Mammary epithelial cell (primary cell): ENCODE measurements at regions of chr1 and their contacts with region 1.

Region 1: DNA sequence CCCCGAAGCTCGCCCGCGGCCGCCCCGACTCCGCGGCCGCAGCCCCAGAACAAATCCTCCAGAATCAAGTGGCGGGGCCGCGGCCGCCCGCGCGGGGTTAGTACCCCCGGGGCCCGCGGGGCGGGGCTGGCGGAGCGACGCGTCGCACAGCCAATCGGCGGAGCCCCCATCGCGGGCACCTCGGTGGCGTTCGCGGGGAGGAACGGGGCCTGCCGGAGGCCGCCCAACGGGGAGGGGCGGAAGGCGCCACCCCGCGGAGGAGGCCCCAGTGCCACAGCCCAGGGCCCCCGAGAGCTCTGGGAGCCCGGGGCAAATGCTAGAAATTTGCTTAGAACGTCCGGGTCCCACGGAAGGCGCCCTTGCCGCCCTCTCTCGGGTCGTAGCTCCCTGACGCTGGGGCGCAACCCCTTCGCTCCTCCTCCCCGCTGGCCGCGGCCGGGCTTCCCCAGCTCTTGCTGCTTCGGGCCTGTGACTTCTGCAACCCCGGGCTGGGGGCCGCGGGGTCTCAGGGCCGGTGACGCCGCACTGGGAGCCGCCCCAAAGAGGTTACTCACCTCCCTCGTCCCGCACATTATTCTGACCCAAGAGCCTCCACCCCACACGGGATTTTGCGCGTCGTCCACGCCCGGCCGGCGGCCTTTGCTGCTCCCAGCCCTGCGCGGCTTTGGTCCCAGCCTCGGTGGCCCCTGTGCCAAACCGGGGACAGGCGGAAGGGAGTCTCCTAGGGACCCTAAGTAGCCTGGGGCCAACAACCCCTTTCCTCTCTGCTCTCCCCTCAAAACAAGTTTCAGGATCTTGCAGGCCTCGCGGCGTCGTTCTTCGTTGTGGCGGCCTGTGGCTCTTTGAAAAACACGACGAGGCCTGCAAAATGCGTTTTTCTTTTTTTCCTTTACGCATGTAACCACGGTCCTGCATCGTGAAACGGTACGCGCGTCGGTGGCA is at the start of gene RUNX3:
- DNase-seq: peak; percentile 21
- H3K4me3 ChIP-seq: peak within 1 kb of the TSS in 2 of 3 experiments; percentile 25 to 27
- H3K27ac ChIP-seq: no peak within 1 kb of the TSS
- H3K4me1 ChIP-seq: peaks cover 9% of the 10 kb centered on the region
- H3K27me3 ChIP-seq: peaks cover 22% of the 10 kb centered on the region
- CTCF ChIP-seq: peak in 1 of 2 donors; percentile 11
- total RNA-seq, gene RUNX3: 0.42 to 2.8 TPM

Region 2: GRCh38 chr1:24847995-24848881 is 82.2 kb before region 1 on chr1:
- CTCF ChIA-PET with region 1: no interaction called
- dilution Hi-C with region 1: no loop called
- in situ Hi-C with region 1: no loop called
- intact Hi-C with region 1: loop called (anchors 5 kb)
- DNase-seq: peak; percentile 54
- H3K4me3 ChIP-seq: peak overlapping the region; percentile 23 to 41 (median 41)
- H3K27ac ChIP-seq: no peak overlapping the region
- H3K4me1 ChIP-seq: peaks cover 11% of the 10 kb centered on the region
- H3K27me3 ChIP-seq: no peaks in the 10 kb centered on the region
- CTCF ChIP-seq: peak; percentile 58 to 95

Region 3: DNA sequence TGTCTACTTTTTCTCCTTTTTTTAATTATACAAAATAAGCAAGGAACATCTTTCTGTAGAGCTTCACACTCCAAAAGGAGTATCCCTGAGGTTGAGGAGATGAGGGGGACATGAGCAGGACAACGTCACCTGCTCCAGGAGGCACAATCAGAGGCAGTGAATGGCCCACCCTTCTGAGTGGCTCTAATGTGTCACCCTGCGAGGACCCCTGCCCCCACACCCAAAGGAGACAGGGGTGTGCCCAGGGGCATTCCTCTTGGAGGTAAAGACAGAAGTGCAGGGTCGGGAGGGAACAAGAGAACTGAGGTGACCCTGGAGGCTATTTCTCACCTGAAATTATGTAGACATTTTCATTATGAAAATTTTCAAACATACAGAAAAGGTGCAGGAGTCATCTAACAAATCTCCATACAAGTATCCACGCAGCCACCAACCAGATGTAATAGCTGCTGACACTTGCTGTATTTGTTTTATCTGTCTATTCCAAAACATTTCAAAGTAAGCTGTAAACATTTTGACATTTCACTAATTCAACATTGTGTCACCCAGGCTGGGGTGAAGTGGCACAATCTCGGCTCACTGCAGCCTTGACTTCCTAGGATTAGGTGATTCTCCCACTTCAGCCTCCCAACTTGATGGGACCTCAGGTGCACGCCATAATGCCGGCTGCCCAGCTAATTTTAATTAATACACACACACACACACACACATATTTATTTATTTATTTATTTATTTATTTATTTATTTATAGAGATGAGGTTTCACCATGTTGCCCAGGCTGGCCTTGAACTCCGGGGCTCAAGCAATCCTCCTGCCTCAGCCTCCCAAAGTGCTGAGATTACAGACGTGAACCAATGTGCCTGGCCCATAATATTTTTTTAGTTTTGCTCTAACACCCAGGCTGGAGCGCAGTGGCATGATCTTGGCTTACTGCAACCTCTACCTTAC is 71.1 kb before region 1 on chr1:
- CTCF ChIA-PET with region 1: no interaction called
- dilution Hi-C with region 1: no loop called
- in situ Hi-C with region 1: no loop called
- intact Hi-C with region 1: no loop called
- DNase-seq: no peak
- H3K4me3 ChIP-seq: no peak overlapping the region
- H3K27ac ChIP-seq: no peak overlapping the region
- H3K4me1 ChIP-seq: no peaks in the 10 kb centered on the region
- H3K27me3 ChIP-seq: no peaks in the 10 kb centered on the region
- CTCF ChIP-seq: no peak

Region 4: GRCh38 chr1:24987875-24988557 is 57.5 kb after region 1 on chr1:
- CTCF ChIA-PET with region 1: no interaction called
- dilution Hi-C with region 1: loop called (anchors 10 kb)
- in situ Hi-C with region 1: no loop called
- intact Hi-C with region 1: no loop called
- DNase-seq: no peak
- H3K4me3 ChIP-seq: no peak overlapping the region
- H3K27ac ChIP-seq: no peak overlapping the region
- H3K4me1 ChIP-seq: no peaks in the 10 kb centered on the region
- H3K27me3 ChIP-seq: no peaks in the 10 kb centered on the region
- CTCF ChIP-seq: no peak

Region 5: GRCh38 chr1:25006770-25007169 is 76.3 kb after region 1 on chr1:
- CTCF ChIA-PET with region 1: no interaction called
- dilution Hi-C with region 1: loop called (anchors 5 kb)
- in situ Hi-C with region 1: no loop called
- intact Hi-C with region 1: no loop called
- DNase-seq: no peak
- H3K4me3 ChIP-seq: no peak overlapping the region
- H3K27ac ChIP-seq: no peak overlapping the region
- H3K4me1 ChIP-seq: no peaks in the 10 kb centered on the region
- H3K27me3 ChIP-seq: peaks cover 9% of the 10 kb centered on the region
- CTCF ChIP-seq: no peak

Region 6: GRCh38 chr1:25037174-25038074 is 106.9 kb after region 1 on chr1:
- CTCF ChIA-PET with region 1: no interaction called
- dilution Hi-C with region 1: no loop called
- in situ Hi-C with region 1: no loop called
- intact Hi-C with region 1: loop called (anchors 1 kb)
- DNase-seq: no peak
- H3K4me3 ChIP-seq: no peak overlapping the region
- H3K27ac ChIP-seq: no peak overlapping the region
- H3K4me1 ChIP-seq: peaks cover 5% of the 10 kb centered on the region
- H3K27me3 ChIP-seq: no peaks in the 10 kb centered on the region
- CTCF ChIP-seq: peak; percentile 65 to 68

Region 7: DNA sequence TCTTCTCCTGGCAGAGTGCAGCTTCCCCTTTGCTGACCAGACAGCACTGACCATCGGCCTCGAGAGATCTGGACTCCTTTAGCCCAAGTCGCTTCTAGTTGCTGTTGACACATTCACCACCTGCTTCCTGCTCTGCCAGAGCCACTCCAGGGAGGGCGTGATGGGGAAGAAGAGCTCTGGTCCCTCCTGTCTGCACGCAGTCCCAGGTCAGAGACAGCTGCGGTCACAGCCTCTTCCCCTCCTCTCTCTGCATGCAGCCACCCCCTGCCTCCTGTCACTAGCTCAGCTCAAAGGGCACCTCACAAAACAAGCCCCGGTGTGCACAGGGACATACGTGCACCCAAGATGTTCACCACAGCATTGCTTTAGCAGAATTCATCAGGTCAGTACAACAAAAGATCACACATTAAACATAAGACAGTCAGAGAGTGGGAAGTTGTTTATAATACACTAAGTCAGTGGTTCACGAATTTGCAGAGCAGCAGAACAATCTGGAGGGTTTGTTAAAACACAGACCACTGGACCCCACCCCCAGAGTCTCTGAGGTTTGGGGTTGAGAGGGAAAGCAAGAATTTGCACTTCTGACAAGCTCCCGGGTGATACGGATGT is 169.0 kb after region 1 on chr1:
- CTCF ChIA-PET with region 1: no interaction called
- dilution Hi-C with region 1: no loop called
- in situ Hi-C with region 1: loop called (anchors 10 kb)
- intact Hi-C with region 1: loop called (anchors 1 kb)
- DNase-seq: no peak
- H3K4me3 ChIP-seq: no peak overlapping the region
- H3K27ac ChIP-seq: no peak overlapping the region
- H3K4me1 ChIP-seq: no peaks in the 10 kb centered on the region
- H3K27me3 ChIP-seq: peaks cover 2% of the 10 kb centered on the region
- CTCF ChIP-seq: no peak

Region 8: GRCh38 chr1:25204797-25205480 is 274.5 kb after region 1 on chr1:
- CTCF ChIA-PET with region 1: no interaction called
- dilution Hi-C with region 1: loop called (anchors 25 kb)
- in situ Hi-C with region 1: loop called in 1 of 2 experiments (anchors 25 kb)
- intact Hi-C with region 1: loop called (anchors 2 kb)
- DNase-seq: peak; percentile 17
- H3K4me3 ChIP-seq: no peak overlapping the region
- H3K27ac ChIP-seq: no peak overlapping the region
- H3K4me1 ChIP-seq: no peaks in the 10 kb centered on the region
- H3K27me3 ChIP-seq: no peaks in the 10 kb centered on the region
- CTCF ChIP-seq: peak; percentile 51 to 68